Dorsolateral prefrontal cortex (tissue), 120 donors: ENCODE measurements at regions of chr17 and their contacts with region 1.

Region 1: DNA sequence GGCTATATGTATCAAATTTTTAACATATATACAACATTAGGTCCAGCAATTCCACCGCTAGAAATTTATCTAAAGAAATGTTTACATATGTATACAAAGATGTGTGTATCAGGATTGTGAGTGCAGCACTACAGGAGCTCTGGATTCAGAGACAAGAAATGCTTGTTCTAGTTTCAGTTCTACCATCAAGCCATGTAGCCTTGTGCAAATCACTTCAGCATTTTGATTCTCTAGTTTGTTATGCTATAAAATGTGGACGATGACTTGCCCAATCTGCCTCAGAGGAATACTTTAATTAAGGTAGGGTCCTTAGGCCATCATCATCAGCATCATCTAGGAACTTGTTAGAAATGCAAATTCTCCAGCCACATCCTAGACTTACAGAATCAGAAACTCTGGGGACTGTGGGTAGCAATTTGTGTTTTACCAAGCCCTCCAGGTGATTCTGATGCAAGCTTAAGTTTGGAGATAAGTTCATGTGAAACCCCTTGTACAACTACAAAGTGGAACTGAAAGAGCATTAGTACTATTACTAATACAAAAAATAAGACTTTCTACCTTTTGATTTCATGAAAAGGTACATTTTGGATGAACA is 131.2 kb upstream of the CORO6 start:
- DNase-seq: no peak
- H3K4me3 ChIP-seq: no peak overlapping the region
- H3K27ac ChIP-seq: peak overlapping the region in 16 of 59 donors; percentile 8 to 58 (median 32)
- H3K27me3 ChIP-seq: no peaks in the 10 kb centered on the region
- CTCF ChIP-seq: no peak

Region 2: DNA sequence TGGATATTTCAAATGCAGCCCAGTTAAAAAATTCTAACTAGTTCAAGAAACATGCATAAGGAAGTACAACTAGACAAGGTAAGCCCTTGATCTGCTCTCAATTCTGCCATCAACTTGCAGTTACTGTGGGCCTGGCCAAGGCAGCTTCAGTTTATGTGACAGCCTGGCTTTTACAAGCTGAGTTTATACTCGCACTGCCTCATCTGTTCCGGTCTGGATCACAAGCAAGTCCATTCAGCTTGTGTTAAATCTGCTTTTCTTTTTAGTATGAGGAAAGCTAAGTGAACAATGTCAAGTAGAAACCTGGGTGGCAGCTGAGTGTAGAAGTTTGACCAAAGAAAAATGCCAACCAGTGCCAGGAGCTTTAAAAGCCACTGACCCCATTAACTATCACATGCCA is 54.7 kb before region 1 on chr17:
- intact Hi-C with region 1: loop called in 1 of 2 experiments (anchors 10 kb)
- DNase-seq: peak in 2 of 10 donors; percentile 34 to 42
- H3K4me3 ChIP-seq: peak overlapping the region in 1 of 59 donors; percentile 3
- H3K27ac ChIP-seq: peak overlapping the region in 58 of 59 donors; percentile 1 to 86 (median 72)
- H3K27me3 ChIP-seq: no peaks in the 10 kb centered on the region
- CTCF ChIP-seq: peak in 1 of 56 donors; percentile 9

Region 3: GRCh38 chr17:30203471-30203981 is 449.6 kb after region 1 on chr17:
- intact Hi-C with region 1: no loop called
- DNase-seq: no peak
- H3K4me3 ChIP-seq: no peak overlapping the region
- H3K27ac ChIP-seq: no peak overlapping the region
- H3K27me3 ChIP-seq: no peaks in the 10 kb centered on the region
- CTCF ChIP-seq: no peak